IMR-90 (cell line): ENCODE measurements at regions of chr2 and their contacts with region 1.

Region 1: GRCh38 chr2:18690342-18690741 is 101.0 kb upstream of the NT5C1B start:
- DNase-seq: no peak
- ATAC-seq: no peak
- H3K4me3 ChIP-seq: no peak overlapping the region
- H3K27ac ChIP-seq: no peak overlapping the region
- H3K4me1 ChIP-seq: no peaks in the 10 kb centered on the region
- H3K27me3 ChIP-seq: peaks cover 14% of the 10 kb centered on the region
- CTCF ChIP-seq: no peak
- POLR2A ChIP-seq: no peak
- RAD21 ChIP-seq: no peak

Region 2: DNA sequence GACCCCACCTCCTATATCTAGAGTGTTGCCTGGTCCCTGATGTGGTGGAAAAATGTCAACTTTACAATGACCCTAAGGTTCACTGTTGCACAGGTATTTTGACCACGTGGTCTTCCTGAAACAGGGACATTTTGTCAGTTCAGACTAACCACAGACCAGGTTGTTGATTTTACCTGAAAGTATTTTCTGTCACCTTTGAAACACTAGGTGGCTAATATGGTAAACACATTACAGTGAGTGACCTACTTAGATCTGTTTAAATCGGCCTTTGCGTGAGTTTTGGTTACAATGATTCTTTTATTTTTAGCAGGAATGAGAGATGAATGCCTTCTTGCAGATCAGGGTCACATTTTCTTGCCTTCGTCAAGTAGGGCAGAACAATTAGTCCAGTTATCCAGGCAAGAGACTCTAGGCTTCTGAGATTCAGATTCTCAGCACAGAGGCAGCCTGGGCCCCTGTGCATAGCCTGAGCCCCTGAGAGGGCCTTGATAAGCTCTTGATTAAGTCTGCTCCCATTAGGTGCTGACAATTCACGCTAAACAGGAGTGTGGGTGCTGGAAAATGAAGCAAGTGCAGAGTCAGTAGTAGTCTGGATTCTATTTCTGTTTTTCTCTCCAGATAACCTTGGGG is 585.6 kb before region 1 on chr2:
- CTCF ChIA-PET with region 1: no interaction called
- POLR2A ChIA-PET with region 1: no interaction called
- dilution Hi-C with region 1: no loop called
- in situ Hi-C with region 1: no loop called
- intact Hi-C with region 1: no loop called
- DNase-seq: no peak
- ATAC-seq: no peak
- H3K4me3 ChIP-seq: no peak overlapping the region
- H3K27ac ChIP-seq: no peak overlapping the region
- H3K4me1 ChIP-seq: no peaks in the 10 kb centered on the region
- H3K27me3 ChIP-seq: peaks cover 2% of the 10 kb centered on the region; the same call in 1 of the 2 replicates
- CTCF ChIP-seq: no peak
- POLR2A ChIP-seq: no peak
- RAD21 ChIP-seq: no peak

Region 3: GRCh38 chr2:18668221-18668620 is 22.1 kb before region 1 on chr2:
- CTCF ChIA-PET with region 1: no interaction called
- POLR2A ChIA-PET with region 1: no interaction called
- dilution Hi-C with region 1: no loop called
- in situ Hi-C with region 1: no loop called
- intact Hi-C with region 1: loop called (anchors 1 kb)
- DNase-seq: no peak
- ATAC-seq: no peak
- H3K4me3 ChIP-seq: no peak overlapping the region
- H3K27ac ChIP-seq: no peak overlapping the region
- H3K4me1 ChIP-seq: no peaks in the 10 kb centered on the region; the same call in 1 of the 2 replicates
- H3K27me3 ChIP-seq: no peaks in the 10 kb centered on the region
- CTCF ChIP-seq: no peak
- POLR2A ChIP-seq: no peak
- RAD21 ChIP-seq: no peak